ENCODE measurements at regions of chr11 and their contacts with region 1.

Region 1: DNA sequence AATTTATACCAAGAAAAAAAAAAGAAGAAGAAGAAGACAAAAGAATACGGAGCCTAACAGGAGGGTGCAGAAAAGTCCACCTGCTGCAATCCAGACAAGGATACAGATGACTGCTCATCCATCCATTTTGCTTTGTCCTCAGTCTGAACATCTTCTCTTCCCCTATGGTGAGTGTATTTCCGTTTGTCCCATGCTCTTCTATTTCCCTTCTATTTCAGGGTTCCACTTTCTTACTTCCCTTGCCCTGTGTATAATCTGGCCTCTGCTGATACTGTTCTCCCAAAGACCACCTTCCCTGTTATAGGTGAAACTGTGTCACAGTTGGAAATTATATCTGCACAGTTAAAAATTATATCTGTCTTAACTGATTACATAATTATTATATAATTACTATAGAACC is 48.7 kb upstream of the USP47 start:
- DNase-seq: no peak
- H3K4me3 ChIP-seq: no peak overlapping the region
- CTCF ChIP-seq: no peak

Region 2: GRCh38 chr11:11036848-11037732 is 756.0 kb before region 1 on chr11:
- CTCF ChIA-PET with region 1: interaction called, 154 read pairs
- POLR2A ChIA-PET with region 1: no interaction called
- DNase-seq: no peak
- H3K4me3 ChIP-seq: no peak overlapping the region
- CTCF ChIP-seq: peak; percentile 58